B cell (primary cell): ENCODE measurements at regions of chr14 and their contacts with region 1.

Region 1: DNA sequence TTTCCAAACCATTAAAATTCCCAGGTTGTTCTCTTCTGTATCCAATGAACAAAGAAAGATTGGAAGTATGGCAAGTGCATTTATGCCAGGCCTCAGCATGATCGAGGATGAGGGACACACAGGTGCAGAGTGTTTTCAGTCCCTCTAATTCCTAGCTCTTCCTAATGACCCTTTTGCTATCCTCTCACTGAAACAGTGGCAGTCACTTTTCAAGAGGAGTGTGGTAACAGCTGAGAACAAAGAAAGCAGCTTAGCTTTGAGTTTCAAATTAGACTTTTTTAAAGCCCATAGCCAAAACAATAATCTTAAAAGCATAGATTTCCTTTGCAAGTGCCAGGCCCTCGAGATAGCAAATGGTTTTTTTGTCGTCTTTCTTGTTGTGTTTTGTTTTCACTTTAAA is 110.8 kb downstream of the KCNH5 start:
- DNase-seq: no peak
- ATAC-seq: no peak
- H3K4me3 ChIP-seq: no peak overlapping the region
- H3K4me3 Mint-ChIP-seq: no peak overlapping the region
- H3K27ac ChIP-seq: no peak overlapping the region
- H3K27ac Mint-ChIP-seq: no peak overlapping the region
- H3K4me1 ChIP-seq: no peaks in the 10 kb centered on the region
- H3K4me1 Mint-ChIP-seq: no peaks in the 10 kb centered on the region
- H3K27me3 ChIP-seq: no peaks in the 10 kb centered on the region
- H3K27me3 Mint-ChIP-seq: no peaks in the 10 kb centered on the region
- CTCF ChIP-seq: no peak

Region 2: DNA sequence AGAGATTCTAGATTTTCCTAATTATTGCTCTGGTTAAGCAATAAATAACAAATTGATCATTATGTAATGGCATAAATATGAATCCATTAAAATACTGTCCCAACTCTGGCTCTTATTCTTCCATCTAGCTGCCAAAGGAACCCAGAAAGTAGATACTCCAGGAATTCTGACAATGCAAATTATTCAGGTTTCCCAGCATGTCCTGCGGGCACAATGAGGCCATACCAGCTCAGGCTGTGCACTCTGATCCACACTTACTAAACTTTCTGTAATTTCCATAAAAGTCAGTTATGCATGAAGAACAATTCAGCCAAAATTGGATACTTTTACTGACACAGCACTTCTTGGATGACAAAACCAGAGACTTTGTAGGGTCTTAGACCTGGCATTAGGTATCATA is 465.5 kb before region 1 on chr14:
- CTCF ChIA-PET with region 1: no interaction called
- POLR2A ChIA-PET with region 1: no interaction called
- intact Hi-C with region 1: no loop called
- DNase-seq: no peak
- ATAC-seq: no peak
- H3K4me3 ChIP-seq: no peak overlapping the region
- H3K4me3 Mint-ChIP-seq: no peak overlapping the region
- H3K27ac ChIP-seq: no peak overlapping the region
- H3K27ac Mint-ChIP-seq: no peak overlapping the region
- H3K4me1 ChIP-seq: no peaks in the 10 kb centered on the region
- H3K4me1 Mint-ChIP-seq: no peaks in the 10 kb centered on the region
- H3K27me3 ChIP-seq: no peaks in the 10 kb centered on the region
- H3K27me3 Mint-ChIP-seq: no peaks in the 10 kb centered on the region
- CTCF ChIP-seq: no peak

Region 3: DNA sequence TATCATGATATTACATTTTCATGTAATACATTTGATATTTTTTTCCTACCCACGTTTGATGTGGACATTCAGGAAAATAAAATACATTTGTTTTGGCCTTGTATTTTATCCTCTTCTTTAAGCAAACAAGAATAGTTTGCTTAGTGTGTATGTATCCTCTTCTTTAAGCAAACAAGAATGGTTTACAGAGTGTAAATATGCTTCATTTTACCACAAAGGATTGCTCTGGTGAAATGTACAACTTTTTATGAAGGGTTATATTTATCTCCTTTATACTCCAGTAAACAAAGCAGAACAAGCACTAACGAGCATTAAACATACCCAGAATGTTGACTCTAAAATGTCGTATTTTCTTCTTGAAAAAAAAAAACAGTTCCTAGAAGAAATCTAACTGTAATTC is 133.9 kb before region 1 on chr14:
- CTCF ChIA-PET with region 1: no interaction called
- POLR2A ChIA-PET with region 1: no interaction called
- intact Hi-C with region 1: no loop called
- DNase-seq: no peak
- ATAC-seq: no peak
- H3K4me3 ChIP-seq: no peak overlapping the region
- H3K4me3 Mint-ChIP-seq: no peak overlapping the region
- H3K27ac ChIP-seq: no peak overlapping the region
- H3K27ac Mint-ChIP-seq: no peak overlapping the region
- H3K4me1 ChIP-seq: no peaks in the 10 kb centered on the region
- H3K4me1 Mint-ChIP-seq: no peaks in the 10 kb centered on the region
- H3K27me3 ChIP-seq: no peaks in the 10 kb centered on the region
- H3K27me3 Mint-ChIP-seq: no peaks in the 10 kb centered on the region
- CTCF ChIP-seq: no peak

Region 4: GRCh38 chr14:62914025-62914424 is 20.4 kb before region 1 on chr14:
- CTCF ChIA-PET with region 1: no interaction called
- POLR2A ChIA-PET with region 1: no interaction called
- intact Hi-C with region 1: no loop called
- DNase-seq: no peak
- ATAC-seq: no peak
- H3K4me3 ChIP-seq: no peak overlapping the region
- H3K4me3 Mint-ChIP-seq: no peak overlapping the region
- H3K27ac ChIP-seq: no peak overlapping the region
- H3K27ac Mint-ChIP-seq: no peak overlapping the region
- H3K4me1 ChIP-seq: no peaks in the 10 kb centered on the region
- H3K4me1 Mint-ChIP-seq: no peaks in the 10 kb centered on the region
- H3K27me3 ChIP-seq: no peaks in the 10 kb centered on the region
- H3K27me3 Mint-ChIP-seq: no peaks in the 10 kb centered on the region
- CTCF ChIP-seq: no peak

Region 5: GRCh38 chr14:63229330-63230059 is 295.1 kb after region 1 on chr14:
- CTCF ChIA-PET with region 1: no interaction called
- POLR2A ChIA-PET with region 1: no interaction called
- intact Hi-C with region 1: loop called (anchors 5 kb)
- DNase-seq: no peak
- ATAC-seq: no peak
- H3K4me3 ChIP-seq: no peak overlapping the region
- H3K4me3 Mint-ChIP-seq: no peak overlapping the region
- H3K27ac ChIP-seq: no peak overlapping the region
- H3K27ac Mint-ChIP-seq: no peak overlapping the region
- H3K4me1 ChIP-seq: no peaks in the 10 kb centered on the region
- H3K4me1 Mint-ChIP-seq: no peaks in the 10 kb centered on the region
- H3K27me3 ChIP-seq: peaks cover 0 to 3% (median 0%) of the 10 kb centered on the region in 4 experiments
- H3K27me3 Mint-ChIP-seq: peaks cover 9% of the 10 kb centered on the region
- CTCF ChIP-seq: no peak